ENCODE measurements at regions of chr3 and their contacts with region 1.

Region 1: GRCh38 chr3:89851974-89852621 is 744.7 kb downstream of the EPHA3 start:
- DNase-seq: peak; percentile 65
- H3K4me3 Mint-ChIP-seq: no peak overlapping the region
- H3K27ac Mint-ChIP-seq: no peak overlapping the region
- H3K4me1 Mint-ChIP-seq: no peaks in the 10 kb centered on the region
- H3K27me3 Mint-ChIP-seq: no peaks in the 10 kb centered on the region
- CTCF ChIP-seq: peak; percentile 59

Region 2: DNA sequence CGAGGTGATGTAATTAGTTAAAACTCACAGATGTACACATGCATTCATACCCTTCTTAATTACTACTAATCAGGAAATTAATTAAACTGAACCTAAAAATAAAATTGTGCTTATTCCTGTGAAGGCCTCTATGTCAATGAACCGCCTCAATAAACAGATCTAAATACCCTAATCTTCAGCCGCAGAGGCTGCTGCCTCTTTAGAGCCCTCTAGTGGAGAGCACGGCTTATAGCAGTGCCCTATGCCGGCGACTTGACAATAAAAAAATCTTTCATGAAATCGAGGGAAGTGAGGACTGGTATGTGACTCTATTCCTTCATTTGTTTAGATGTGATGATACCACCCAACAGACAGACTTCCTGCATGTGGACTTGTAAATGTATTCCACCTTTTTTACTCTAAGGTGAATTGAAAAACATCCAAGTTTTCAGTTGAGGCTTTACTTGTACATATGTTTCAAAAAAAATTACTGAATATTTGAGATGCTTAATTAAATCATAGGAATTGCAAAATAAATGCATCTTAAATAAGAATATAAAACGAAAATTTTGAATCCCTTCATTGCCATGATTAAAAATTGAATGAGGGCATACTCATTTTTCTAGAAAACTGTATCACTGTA is 753.0 kb before region 1 on chr3:
- CTCF ChIA-PET with region 1: no interaction called
- POLR2A ChIA-PET with region 1: no interaction called
- intact Hi-C with region 1: loop called (anchors 5 kb)
- DNase-seq: peak; percentile 60
- H3K4me3 Mint-ChIP-seq: no peak overlapping the region
- H3K27ac Mint-ChIP-seq: no peak overlapping the region
- H3K4me1 Mint-ChIP-seq: peaks cover 7% of the 10 kb centered on the region
- H3K27me3 Mint-ChIP-seq: no peaks in the 10 kb centered on the region
- CTCF ChIP-seq: peak; percentile 90

Region 3: DNA sequence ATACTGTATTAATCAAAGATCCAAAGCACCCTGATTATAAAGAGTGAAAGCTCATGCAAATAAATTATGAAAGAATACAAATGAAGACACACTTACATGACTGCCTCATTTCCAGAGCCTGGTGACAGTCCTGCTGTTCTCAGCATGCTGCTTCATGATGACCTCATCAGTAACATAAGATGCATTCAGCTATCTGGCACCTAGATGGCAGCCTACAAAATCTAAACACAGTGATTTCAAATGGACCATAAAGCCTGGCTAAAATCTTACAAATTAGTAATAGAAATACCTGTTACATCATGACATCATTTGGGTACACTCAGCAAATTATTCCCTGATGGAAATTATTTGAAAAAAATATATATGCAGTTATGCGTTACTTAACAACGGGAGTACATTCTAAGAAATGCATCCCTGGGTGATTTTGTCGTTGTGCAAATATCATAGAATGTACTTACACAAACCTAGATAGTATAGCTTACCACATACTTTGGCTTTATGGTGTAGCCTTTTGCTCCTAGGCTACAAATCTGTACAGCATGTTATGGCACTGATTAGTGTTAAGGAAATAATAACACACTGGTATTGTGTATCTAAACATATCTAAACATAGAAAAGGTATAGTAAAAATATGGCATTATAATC is 537.5 kb before region 1 on chr3:
- CTCF ChIA-PET with region 1: no interaction called
- POLR2A ChIA-PET with region 1: no interaction called
- intact Hi-C with region 1: loop called (anchors 2 kb)
- DNase-seq: peak; percentile 51
- H3K4me3 Mint-ChIP-seq: no peak overlapping the region
- H3K27ac Mint-ChIP-seq: no peak overlapping the region
- H3K4me1 Mint-ChIP-seq: no peaks in the 10 kb centered on the region
- H3K27me3 Mint-ChIP-seq: peaks cover 51% of the 10 kb centered on the region
- CTCF ChIP-seq: peak; percentile 21

Region 4: GRCh38 chr3:89877230-89877629 is 25.1 kb after region 1 on chr3:
- CTCF ChIA-PET with region 1: no interaction called
- POLR2A ChIA-PET with region 1: no interaction called
- intact Hi-C with region 1: no loop called
- DNase-seq: no peak
- H3K4me3 Mint-ChIP-seq: no peak overlapping the region
- H3K27ac Mint-ChIP-seq: no peak overlapping the region
- H3K4me1 Mint-ChIP-seq: no peaks in the 10 kb centered on the region
- H3K27me3 Mint-ChIP-seq: no peaks in the 10 kb centered on the region
- CTCF ChIP-seq: no peak

Region 5: DNA sequence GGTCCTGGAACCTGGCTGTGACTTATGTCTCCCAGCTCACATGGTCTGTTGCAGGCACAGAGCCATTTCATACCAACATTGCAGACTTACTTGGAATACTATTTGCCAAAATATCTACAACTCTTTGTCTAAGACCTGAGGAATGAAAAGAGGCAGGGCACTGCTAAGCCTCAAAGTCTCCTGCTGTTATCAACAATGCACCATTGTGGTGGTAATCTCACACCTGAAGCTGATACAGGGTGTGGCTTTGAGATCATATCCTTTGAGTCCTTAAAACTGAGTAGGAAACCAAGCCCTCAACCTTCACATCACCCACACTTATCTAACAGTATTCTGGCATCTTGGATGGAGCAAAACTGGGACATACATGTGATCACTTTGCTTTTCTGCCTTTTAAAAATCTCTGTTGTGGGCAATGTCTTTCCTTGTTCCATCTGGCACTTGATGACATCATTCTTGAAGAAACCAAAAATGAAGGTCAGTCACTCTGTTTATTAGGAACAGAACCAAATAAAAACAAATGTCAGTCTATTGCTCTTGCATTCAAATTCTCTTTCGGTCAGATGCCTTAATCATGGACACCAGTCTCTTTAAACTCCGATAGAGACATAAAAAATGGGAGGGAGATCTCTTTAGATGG is 37.4 kb after region 1 on chr3:
- CTCF ChIA-PET with region 1: no interaction called
- POLR2A ChIA-PET with region 1: no interaction called
- intact Hi-C with region 1: no loop called
- DNase-seq: no peak
- H3K4me3 Mint-ChIP-seq: no peak overlapping the region
- H3K27ac Mint-ChIP-seq: no peak overlapping the region
- H3K4me1 Mint-ChIP-seq: no peaks in the 10 kb centered on the region
- H3K27me3 Mint-ChIP-seq: no peaks in the 10 kb centered on the region
- CTCF ChIP-seq: no peak

Measured in MCF 10A (cell line).